ENCODE measurements at regions of chr22 and their contacts with region 1.

Region 1: DNA sequence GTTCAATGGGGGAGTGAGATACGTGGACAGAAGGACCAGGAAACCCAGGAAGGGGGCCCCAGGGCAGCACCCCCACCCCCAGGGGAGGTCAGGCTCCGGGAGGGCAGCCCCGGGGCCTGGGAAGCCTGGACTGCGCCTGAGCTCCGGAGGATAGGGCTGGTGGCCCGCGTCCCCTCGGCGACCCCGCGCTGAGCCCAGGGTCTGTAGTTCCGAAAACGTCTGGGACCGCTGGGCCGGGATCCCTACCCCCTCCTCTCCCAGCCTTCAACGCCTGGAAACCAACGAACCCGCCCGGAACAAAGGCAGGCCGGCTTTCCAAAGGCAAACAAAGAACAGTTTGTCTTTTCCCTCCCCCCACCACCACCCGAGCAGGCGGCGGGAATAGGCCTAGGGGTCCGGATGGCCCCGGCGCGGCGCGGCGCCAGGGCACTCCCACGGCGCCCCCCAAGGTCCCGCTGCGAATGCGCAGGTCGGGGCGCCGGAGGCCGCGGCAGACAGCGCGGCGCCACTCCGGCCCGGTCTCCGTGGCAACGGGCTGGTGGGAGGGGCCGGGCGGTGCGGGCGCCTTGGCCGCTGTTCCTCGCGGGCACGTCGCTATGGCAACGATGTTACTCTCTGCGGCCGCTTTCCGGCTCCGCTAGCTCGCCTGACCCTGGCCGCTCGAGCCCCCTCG is 58.5 kb downstream of the IGLL1 start:
- DNase-seq: peak; percentile 91 to 95 (median 92)
- ATAC-seq: peak; percentile 83 to 96 (median 92)
- H3K4me3 ChIP-seq: peak overlapping the region; percentile 24 to 63 (median 55)
- H3K27ac ChIP-seq: peak overlapping the region; percentile 84 to 99 (median 92)
- H3K4me1 ChIP-seq: peaks cover 6 to 39% (median 21%) of the 10 kb centered on the region in 12 donors
- H3K27me3 ChIP-seq: peaks cover 0 to 3% (median 0%) of the 10 kb centered on the region in 9 donors
- CTCF ChIP-seq: peak in 6 of 12 donors; percentile 11 to 48 (median 35)
- POLR2A ChIP-seq: peak in 1 of 2 donors; percentile 71

Region 2: DNA sequence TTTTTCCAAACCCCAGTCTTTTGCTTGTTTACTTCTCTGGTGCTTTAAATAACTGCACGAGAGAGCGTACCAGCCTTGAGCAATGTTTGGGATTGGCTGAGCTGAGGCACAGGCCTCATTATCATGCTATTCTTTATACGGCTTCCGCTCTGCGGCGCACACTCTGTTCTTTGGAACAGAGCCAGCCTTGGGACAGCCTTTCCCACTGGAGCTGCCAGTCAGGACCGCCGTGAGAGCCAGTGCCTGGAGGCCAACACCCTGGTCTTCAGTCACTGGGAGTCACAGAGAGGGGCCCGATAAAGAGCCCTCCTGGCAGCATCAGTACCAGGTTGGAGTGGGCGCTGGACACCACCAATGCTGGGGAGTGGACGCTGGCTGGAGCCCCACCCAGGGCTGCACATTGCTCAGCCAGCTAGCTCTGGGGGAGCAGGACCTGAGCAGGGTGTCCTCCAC is 215.6 kb before region 1 on chr22:
- intact Hi-C with region 1: loop called in 3 of 10 experiments (anchors 10 kb)
- DNase-seq: peak; percentile 70 to 91 (median 86)
- ATAC-seq: peak; percentile 88 to 93 (median 91)
- H3K4me3 ChIP-seq: peak overlapping the region in 2 of 12 donors; percentile 19 to 32
- H3K27ac ChIP-seq: peak overlapping the region; percentile 68 to 94 (median 80)
- H3K4me1 ChIP-seq: peaks cover 5 to 32% (median 22%) of the 10 kb centered on the region in 12 donors
- H3K27me3 ChIP-seq: no peaks in the 10 kb centered on the region
- CTCF ChIP-seq: no peak
- POLR2A ChIP-seq: no peak